ENCODE measurements at regions of chr5 and their contacts with region 1.

Region 1: GRCh38 chr5:54443270-54443669 is 12.2 kb upstream of the HSPB3 start:
- DNase-seq: no peak
- ATAC-seq: no peak
- H3K4me3 Mint-ChIP-seq: no peak overlapping the region
- H3K27ac Mint-ChIP-seq: no peak overlapping the region
- H3K4me1 Mint-ChIP-seq: peaks cover 23% of the 10 kb centered on the region
- H3K27me3 Mint-ChIP-seq: no peaks in the 10 kb centered on the region
- CTCF ChIP-seq: no peak

Region 2: GRCh38 chr5:54415896-54416601 is 27.2 kb before region 1 on chr5:
- CTCF ChIA-PET with region 1: interaction called, 11 read pairs
- POLR2A ChIA-PET with region 1: no interaction called
- intact Hi-C with region 1: no loop called
- DNase-seq: no peak
- ATAC-seq: no peak
- H3K4me3 Mint-ChIP-seq: no peak overlapping the region
- H3K27ac Mint-ChIP-seq: no peak overlapping the region
- H3K4me1 Mint-ChIP-seq: no peaks in the 10 kb centered on the region
- H3K27me3 Mint-ChIP-seq: peaks cover 16% of the 10 kb centered on the region
- CTCF ChIP-seq: no peak

Region 3: DNA sequence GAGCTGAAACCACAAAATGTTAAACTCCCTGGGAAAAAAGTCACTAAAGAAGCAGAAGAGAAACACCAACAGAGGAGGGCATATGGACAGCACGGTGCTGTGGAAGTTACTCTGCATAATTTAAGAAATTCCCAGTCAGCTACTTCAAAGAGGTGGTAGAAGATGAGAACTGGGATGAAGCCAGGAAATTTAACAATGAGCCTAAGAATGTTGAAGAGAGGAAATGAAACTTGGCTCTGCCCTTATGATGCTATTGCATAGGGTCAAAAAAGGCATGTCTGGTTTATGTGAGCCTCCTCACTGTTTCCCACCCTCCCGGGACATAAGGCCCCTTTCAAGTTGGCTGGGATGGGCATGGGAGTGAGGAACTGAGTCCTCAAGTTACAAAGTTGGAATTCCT is 48.9 kb after region 1 on chr5:
- CTCF ChIA-PET with region 1: interaction called, 21 read pairs
- POLR2A ChIA-PET with region 1: interaction called, 4 read pairs
- intact Hi-C with region 1: loop called (anchors 1 kb)
- DNase-seq: no peak
- ATAC-seq: no peak
- H3K4me3 Mint-ChIP-seq: no peak overlapping the region
- H3K27ac Mint-ChIP-seq: no peak overlapping the region
- H3K4me1 Mint-ChIP-seq: no peaks in the 10 kb centered on the region
- H3K27me3 Mint-ChIP-seq: peaks cover 9% of the 10 kb centered on the region
- CTCF ChIP-seq: no peak

Region 4: GRCh38 chr5:54867310-54867944 is 424.2 kb after region 1 on chr5:
- CTCF ChIA-PET with region 1: interaction called, 25 read pairs
- POLR2A ChIA-PET with region 1: no interaction called
- intact Hi-C with region 1: loop called (anchors 1 kb)
- DNase-seq: no peak
- ATAC-seq: peak; percentile 77
- H3K4me3 Mint-ChIP-seq: peak overlapping the region; percentile 53
- H3K27ac Mint-ChIP-seq: no peak overlapping the region
- H3K4me1 Mint-ChIP-seq: peaks cover 4% of the 10 kb centered on the region
- H3K27me3 Mint-ChIP-seq: peaks cover 29% of the 10 kb centered on the region
- CTCF ChIP-seq: no peak

Region 5: DNA sequence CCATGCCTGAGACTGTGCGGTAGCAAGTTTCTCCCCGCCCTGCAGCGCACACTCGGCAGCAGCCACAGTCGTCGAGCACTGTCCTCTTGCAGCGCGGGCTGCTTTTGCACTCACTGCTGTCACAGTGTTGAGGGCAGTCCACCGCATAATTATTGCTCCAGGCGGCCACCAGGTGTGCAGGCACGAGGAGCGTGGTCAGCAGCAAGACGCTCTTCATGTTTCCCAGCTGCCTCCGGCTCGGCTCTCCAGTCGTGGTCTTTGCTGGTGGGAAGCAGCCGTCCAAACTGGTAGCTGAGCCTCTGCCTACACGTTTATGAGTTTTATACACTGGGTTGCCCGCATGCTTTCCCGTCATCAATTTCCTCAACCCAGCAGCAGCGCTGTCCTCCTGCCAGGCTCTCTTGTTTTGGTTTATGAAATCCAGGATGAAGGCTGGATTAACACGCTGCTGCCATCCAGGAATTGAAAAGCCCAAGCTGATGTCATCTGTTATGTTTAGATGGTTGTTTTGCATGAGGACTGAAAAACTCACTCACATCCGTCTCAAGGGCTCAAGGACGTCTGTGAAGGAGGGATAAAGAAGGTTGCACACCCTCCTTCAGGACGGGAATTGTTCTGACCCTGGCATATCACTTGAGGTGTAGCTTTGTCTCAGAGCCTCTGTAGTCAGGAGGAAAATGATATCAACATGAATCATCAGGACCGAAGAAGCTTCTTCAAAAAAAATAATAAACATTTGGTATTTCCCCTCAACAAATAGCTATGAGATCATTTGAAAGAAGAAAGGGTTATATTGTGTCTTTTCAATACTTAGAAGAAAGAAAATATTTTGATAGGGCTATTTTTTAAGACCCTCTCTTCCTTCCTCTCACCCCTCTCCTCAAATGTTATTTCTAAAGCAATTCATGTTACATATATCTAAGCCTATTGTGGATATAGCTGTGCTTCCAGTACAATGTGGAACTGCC is 542.3 kb after region 1 on chr5 and contains the start of gene ESM1:
- CTCF ChIA-PET with region 1: no interaction called
- POLR2A ChIA-PET with region 1: no interaction called
- intact Hi-C with region 1: no loop called
- DNase-seq: no peak
- ATAC-seq: no peak
- H3K4me3 Mint-ChIP-seq: no peak within 1 kb of the TSS
- H3K27ac Mint-ChIP-seq: no peak within 1 kb of the TSS
- H3K4me1 Mint-ChIP-seq: no peaks in the 10 kb centered on the region
- H3K27me3 Mint-ChIP-seq: peaks cover 25% of the 10 kb centered on the region
- CTCF ChIP-seq: no peak
- total RNA-seq, gene ESM1: not detected in 2 replicates

Region 6: GRCh38 chr5:55146543-55147151 is 703.4 kb after region 1 on chr5:
- CTCF ChIA-PET with region 1: no interaction called
- POLR2A ChIA-PET with region 1: no interaction called
- intact Hi-C with region 1: loop called (anchors 1 kb)
- DNase-seq: peak; percentile 35
- ATAC-seq: peak; percentile 58
- H3K4me3 Mint-ChIP-seq: no peak overlapping the region
- H3K27ac Mint-ChIP-seq: no peak overlapping the region
- H3K4me1 Mint-ChIP-seq: no peaks in the 10 kb centered on the region
- H3K27me3 Mint-ChIP-seq: peaks cover 14% of the 10 kb centered on the region
- CTCF ChIP-seq: peak; percentile 94